Activated T-helper 2 cell treated with anti-CD3 and anti-CD28 coated beads, Interferon-gamma antibody, Interleukin-2, Interleukin-4, amounts not matched to agents 10 μg/mL and 5 μg/mL and 100 μg/mL, durations not matched to agents 14 hours and 24 hours and 36 hours (primary cell): ENCODE measurements at regions of chrX and their contacts with region 1.

Region 1: DNA sequence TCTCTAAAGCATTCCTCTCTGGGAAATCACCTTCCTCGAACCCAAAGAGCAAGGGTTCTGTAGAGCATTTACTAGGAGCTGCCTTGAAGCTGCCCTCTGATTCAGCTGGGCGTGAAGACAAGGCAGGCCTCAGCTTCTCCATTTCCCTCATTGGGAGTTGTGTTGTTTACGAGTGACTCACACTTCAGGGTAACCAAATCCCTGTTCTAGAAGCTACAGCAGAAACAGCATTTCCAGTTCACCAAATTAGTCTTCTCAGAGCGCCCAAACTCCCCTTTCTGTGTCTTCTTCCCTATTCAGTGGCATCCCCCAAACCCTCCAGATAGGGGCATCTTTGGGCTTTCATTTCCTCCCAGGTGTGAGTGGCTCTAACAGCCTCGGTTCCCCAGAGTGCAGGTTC is 863 bp upstream of the XPNPEP2 start:
- DNase-seq: no peak
- H3K4me3 Mint-ChIP-seq: no peak overlapping the region
- H3K27ac Mint-ChIP-seq: peak overlapping the region; percentile 61
- H3K4me1 Mint-ChIP-seq: peaks cover 32% of the 10 kb centered on the region
- H3K27me3 Mint-ChIP-seq: no peaks in the 10 kb centered on the region

Region 2: GRCh38 chrX:129606918-129607317 is 131.0 kb before region 1 on chrX:
- intact Hi-C with region 1: no loop called
- DNase-seq: peak; percentile 10
- H3K4me3 Mint-ChIP-seq: no peak overlapping the region
- H3K27ac Mint-ChIP-seq: peak overlapping the region; percentile 2
- H3K4me1 Mint-ChIP-seq: peaks cover 19% of the 10 kb centered on the region
- H3K27me3 Mint-ChIP-seq: peaks cover 3% of the 10 kb centered on the region

Region 3: DNA sequence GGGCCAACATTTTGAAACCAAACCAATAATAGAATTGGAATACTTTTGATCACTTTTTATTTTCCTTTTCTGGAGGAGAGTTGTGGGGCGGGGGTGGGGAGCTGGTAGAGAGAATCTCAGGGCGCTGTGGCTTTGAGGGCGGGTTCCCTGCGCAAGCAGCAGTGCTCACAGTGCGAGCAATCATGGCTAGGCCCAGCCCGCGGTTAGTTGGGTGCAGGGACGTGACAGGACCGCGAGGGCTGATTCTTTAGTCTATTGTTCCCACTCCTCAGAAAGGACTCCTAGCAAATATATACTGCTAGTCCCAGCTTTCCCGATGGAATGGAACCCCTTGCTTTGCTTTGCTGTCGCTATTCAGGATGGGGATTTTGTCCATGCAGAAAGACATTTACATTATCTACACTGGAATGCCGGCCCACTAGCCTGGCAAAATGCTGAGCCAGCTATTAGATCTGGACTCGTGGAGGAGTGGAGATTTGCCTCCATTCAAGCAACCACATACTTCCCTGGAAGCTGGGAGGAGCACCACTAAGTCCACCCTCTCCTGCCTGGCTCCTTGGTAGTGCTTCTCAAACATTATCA is 59.2 kb before region 1 on chrX:
- intact Hi-C with region 1: loop called (anchors 5 kb)
- DNase-seq: no peak
- H3K4me3 Mint-ChIP-seq: peak overlapping the region; percentile 49
- H3K27ac Mint-ChIP-seq: no peak overlapping the region
- H3K4me1 Mint-ChIP-seq: peaks cover 4% of the 10 kb centered on the region
- H3K27me3 Mint-ChIP-seq: peaks cover 23% of the 10 kb centered on the region